HepG2 (cell line): ENCODE measurements at regions of chr15 and their contacts with region 1.

Region 1: DNA sequence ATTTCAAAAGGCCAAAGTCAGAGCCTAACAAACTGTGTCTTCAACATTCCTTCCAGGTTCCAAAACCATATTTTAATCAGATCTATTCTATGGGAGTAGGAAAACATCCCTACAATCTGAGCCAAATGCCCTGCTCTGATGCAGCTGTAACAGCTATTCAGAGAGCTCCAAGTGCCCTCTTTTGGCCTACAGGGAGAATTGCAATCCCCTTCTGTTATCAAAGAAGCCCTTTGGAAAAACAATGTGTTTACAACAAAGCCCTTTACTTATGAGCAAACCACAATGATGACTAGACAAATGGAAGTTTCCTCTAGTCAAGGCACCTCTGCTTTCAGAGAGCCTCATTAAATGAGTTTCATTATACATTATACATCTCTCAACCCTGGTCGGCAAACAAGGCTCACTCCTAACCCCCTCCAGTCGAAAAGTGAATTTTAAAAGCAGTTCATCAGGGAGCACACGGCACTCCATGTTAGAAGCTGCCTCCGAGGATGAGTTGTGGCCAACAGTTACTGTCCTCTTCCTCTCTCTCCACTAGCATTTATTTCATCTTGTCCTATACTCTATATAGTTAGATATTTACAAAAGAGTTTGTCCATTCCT is 42.6 kb upstream of the TMCO5A start:
- DNase-seq: peak; percentile 23
- ATAC-seq: peak; percentile 76
- H3K4me3 ChIP-seq: no peak overlapping the region
- H3K27ac ChIP-seq: no peak overlapping the region
- H3K4me1 ChIP-seq: no peaks in the 10 kb centered on the region
- H3K27me3 ChIP-seq: peaks cover 0 to 3% of the 10 kb centered on the region in 2 experiments; a peak in 1 of 5 replicates
- CTCF ChIP-seq: peak; percentile 66
- EP300 ChIP-seq: no peak
- POLR2A ChIP-seq: no peak
- RAD21 ChIP-seq: 0 out of 2 replicates have a peak, but pooled peaks have one; percentile 14

Region 2: DNA sequence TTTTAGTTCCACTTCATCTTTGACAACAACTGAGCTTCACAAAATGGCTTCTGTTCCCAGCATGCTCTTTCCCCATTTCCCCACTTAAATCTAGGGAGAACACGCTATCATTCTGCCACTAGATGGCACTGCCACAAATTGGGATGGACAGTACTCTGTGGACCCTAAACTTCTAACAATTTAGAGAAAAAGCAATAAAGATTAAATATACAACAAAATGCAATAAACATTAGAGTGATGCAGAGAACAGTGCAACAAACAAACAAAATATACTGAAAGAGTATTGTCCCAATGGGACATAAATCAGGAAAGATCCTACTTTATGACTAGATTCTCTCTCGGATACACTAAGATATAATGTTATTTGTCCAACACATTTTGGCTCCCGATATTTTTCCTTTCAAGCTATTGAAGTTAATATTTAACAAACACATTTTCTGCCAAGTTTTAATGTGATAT is 127.1 kb before region 1 on chr15:
- CTCF ChIA-PET with region 1: no interaction called
- POLR2A ChIA-PET with region 1: no interaction called
- in situ Hi-C with region 1: no loop called
- intact Hi-C with region 1: loop called (anchors 10 kb)
- DNase-seq: peak; percentile 35
- ATAC-seq: peak; percentile 79
- H3K4me3 ChIP-seq: no peak overlapping the region
- H3K27ac ChIP-seq: no peak overlapping the region
- H3K4me1 ChIP-seq: no peaks in the 10 kb centered on the region
- H3K27me3 ChIP-seq: no peaks in the 10 kb centered on the region
- CTCF ChIP-seq: peak; percentile 66
- EP300 ChIP-seq: no peak
- POLR2A ChIP-seq: no peak
- RAD21 ChIP-seq: no peak

Region 3: GRCh38 chr15:37847776-37848175 is 44.1 kb before region 1 on chr15:
- CTCF ChIA-PET with region 1: no interaction called
- POLR2A ChIA-PET with region 1: no interaction called
- in situ Hi-C with region 1: no loop called
- intact Hi-C with region 1: no loop called
- DNase-seq: no peak
- ATAC-seq: no peak
- H3K4me3 ChIP-seq: no peak overlapping the region
- H3K27ac ChIP-seq: no peak overlapping the region
- H3K4me1 ChIP-seq: no peaks in the 10 kb centered on the region
- H3K27me3 ChIP-seq: no peaks in the 10 kb centered on the region
- CTCF ChIP-seq: no peak
- EP300 ChIP-seq: no peak
- POLR2A ChIP-seq: no peak
- RAD21 ChIP-seq: no peak